CD4-positive, alpha-beta memory T cell (primary cell): ENCODE measurements at regions of chr5 and their contacts with region 1.

Region 1: GRCh38 chr5:138575194-138576015 is at the start of gene HSPA9:
- DNase-seq: peak; percentile 98 to 99 (median 98)
- H3K4me3 ChIP-seq: peak within 1 kb of the TSS; percentile 88 to 99
- H3K4me3 Mint-ChIP-seq: peak within 1 kb of the TSS; percentile 92 to 99 (median 98)
- H3K27ac ChIP-seq: peak within 1 kb of the TSS; percentile 99
- H3K27ac Mint-ChIP-seq: peak within 1 kb of the TSS; percentile 100
- H3K4me1 ChIP-seq: peaks cover 28% of the 10 kb centered on the region
- H3K4me1 Mint-ChIP-seq: peaks cover 18 to 51% (median 35%) of the 10 kb centered on the region in 4 donors
- H3K27me3 ChIP-seq: no peaks in the 10 kb centered on the region
- H3K27me3 Mint-ChIP-seq: no peaks in the 10 kb centered on the region
- total RNA-seq, gene HSPA9: 144 to 171 TPM

Region 2: GRCh38 chr5:137754126-137754960 is 821.1 kb before region 1 on chr5 and contains the start of gene HNRNPA0:
- CTCF ChIA-PET with region 1: no interaction called
- POLR2A ChIA-PET with region 1: interaction called, 10 read pairs
- intact Hi-C with region 1: loop called (anchors 10 kb)
- DNase-seq: peak; percentile 98 to 99 (median 99)
- H3K4me3 ChIP-seq: peak within 1 kb of the TSS; percentile 49 to 96
- H3K4me3 Mint-ChIP-seq: peak within 1 kb of the TSS; percentile 98 to 100 (median 99)
- H3K27ac ChIP-seq: peak within 1 kb of the TSS; percentile 100
- H3K27ac Mint-ChIP-seq: peak within 1 kb of the TSS; percentile 100
- H3K4me1 ChIP-seq: peaks cover 33% of the 10 kb centered on the region
- H3K4me1 Mint-ChIP-seq: peaks cover 26 to 54% (median 34%) of the 10 kb centered on the region in 4 donors
- H3K27me3 ChIP-seq: no peaks in the 10 kb centered on the region
- H3K27me3 Mint-ChIP-seq: peaks cover 0 to 9% of the 10 kb centered on the region in 2 donors
- total RNA-seq, gene HNRNPA0: 30.5 to 30.7 TPM

Region 3: GRCh38 chr5:138337685-138338410 is 237.6 kb before region 1 on chr5 and contains the start of gene FAM53C:
- CTCF ChIA-PET with region 1: no interaction called
- POLR2A ChIA-PET with region 1: interaction called, 15 read pairs
- intact Hi-C with region 1: loop called (anchors 5 kb)
- DNase-seq: peak; percentile 88 to 96 (median 93)
- H3K4me3 ChIP-seq: peak within 1 kb of the TSS; percentile 74 to 85
- H3K4me3 Mint-ChIP-seq: peak within 1 kb of the TSS; percentile 90 to 95 (median 92)
- H3K27ac ChIP-seq: peak within 1 kb of the TSS; percentile 92
- H3K27ac Mint-ChIP-seq: peak within 1 kb of the TSS; percentile 98 to 100 (median 99)
- H3K4me1 ChIP-seq: peaks cover 29% of the 10 kb centered on the region
- H3K4me1 Mint-ChIP-seq: peaks cover 20 to 48% (median 34%) of the 10 kb centered on the region in 4 donors
- H3K27me3 ChIP-seq: no peaks in the 10 kb centered on the region
- H3K27me3 Mint-ChIP-seq: no peaks in the 10 kb centered on the region
- total RNA-seq, gene FAM53C: 19.3 to 20.4 TPM

Region 4: GRCh38 chr5:138542956-138543729 is 32.3 kb before region 1 on chr5 and contains the start of gene ETF1:
- CTCF ChIA-PET with region 1: interaction called, 21 read pairs
- POLR2A ChIA-PET with region 1: interaction called, 124 read pairs
- intact Hi-C with region 1: loop called (anchors 1 kb)
- DNase-seq: peak; percentile 99 to 100 (median 100)
- H3K4me3 ChIP-seq: peak within 1 kb of the TSS; percentile 80 to 92
- H3K4me3 Mint-ChIP-seq: peak within 1 kb of the TSS; percentile 95 to 100 (median 100)
- H3K27ac ChIP-seq: peak within 1 kb of the TSS; percentile 100
- H3K27ac Mint-ChIP-seq: peak within 1 kb of the TSS; percentile 99 to 100 (median 100)
- H3K4me1 ChIP-seq: peaks cover 73% of the 10 kb centered on the region
- H3K4me1 Mint-ChIP-seq: peaks cover 48 to 87% (median 71%) of the 10 kb centered on the region in 4 donors
- H3K27me3 ChIP-seq: no peaks in the 10 kb centered on the region
- H3K27me3 Mint-ChIP-seq: no peaks in the 10 kb centered on the region
- total RNA-seq, gene ETF1: 42.6 to 46.5 TPM

Region 5: GRCh38 chr5:138654281-138654867 is 79.0 kb after region 1 on chr5:
- CTCF ChIA-PET with region 1: interaction called, 3 read pairs
- POLR2A ChIA-PET with region 1: interaction called, 3 read pairs
- intact Hi-C with region 1: loop called (anchors 1 kb)
- DNase-seq: peak; percentile 80 to 87 (median 81)
- H3K4me3 ChIP-seq: no peak overlapping the region
- H3K4me3 Mint-ChIP-seq: peak overlapping the region in 6 of 8 donors; percentile 9 to 78 (median 52)
- H3K27ac ChIP-seq: no peak overlapping the region
- H3K27ac Mint-ChIP-seq: peak overlapping the region; percentile 19 to 93 (median 48)
- H3K4me1 ChIP-seq: peaks cover 26% of the 10 kb centered on the region
- H3K4me1 Mint-ChIP-seq: peaks cover 17 to 35% (median 24%) of the 10 kb centered on the region in 4 donors
- H3K27me3 ChIP-seq: peaks cover 79% of the 10 kb centered on the region
- H3K27me3 Mint-ChIP-seq: peaks cover 63 to 75% of the 10 kb centered on the region in 2 donors

Region 6: GRCh38 chr5:139293504-139294373 is 718.3 kb after region 1 on chr5 and contains the start of gene MATR3:
- CTCF ChIA-PET with region 1: no interaction called
- POLR2A ChIA-PET with region 1: interaction called, 9 read pairs
- intact Hi-C with region 1: loop called (anchors 1 kb)
- DNase-seq: peak; percentile 91 to 94 (median 93)
- H3K4me3 ChIP-seq: peak within 1 kb of the TSS; percentile 86 to 87
- H3K4me3 Mint-ChIP-seq: peak within 1 kb of the TSS; percentile 97 to 99 (median 98)
- H3K27ac ChIP-seq: peak within 1 kb of the TSS; percentile 100
- H3K27ac Mint-ChIP-seq: peak within 1 kb of the TSS; percentile 97 to 99 (median 99)
- H3K4me1 ChIP-seq: peaks cover 48% of the 10 kb centered on the region
- H3K4me1 Mint-ChIP-seq: peaks cover 30 to 54% (median 38%) of the 10 kb centered on the region in 4 donors
- H3K27me3 ChIP-seq: no peaks in the 10 kb centered on the region
- H3K27me3 Mint-ChIP-seq: no peaks in the 10 kb centered on the region
- total RNA-seq, gene MATR3: 228 to 255 TPM

Region 7: GRCh38 chr5:140107312-140108083 is 1532.1 kb after region 1 on chr5:
- CTCF ChIA-PET with region 1: no interaction called
- POLR2A ChIA-PET with region 1: no interaction called
- intact Hi-C with region 1: loop called (anchors 5 kb)
- DNase-seq: peak; percentile 95 to 96 (median 95)
- H3K4me3 ChIP-seq: peak overlapping the region; percentile 77 to 88
- H3K4me3 Mint-ChIP-seq: peak overlapping the region; percentile 92 to 100 (median 97)
- H3K27ac ChIP-seq: peak overlapping the region; percentile 94
- H3K27ac Mint-ChIP-seq: peak overlapping the region; percentile 97 to 100 (median 99)
- H3K4me1 ChIP-seq: peaks cover 47% of the 10 kb centered on the region
- H3K4me1 Mint-ChIP-seq: peaks cover 19 to 51% (median 39%) of the 10 kb centered on the region in 4 donors
- H3K27me3 ChIP-seq: no peaks in the 10 kb centered on the region
- H3K27me3 Mint-ChIP-seq: no peaks in the 10 kb centered on the region